SK-N-SH (cell line): ENCODE measurements at regions of chrX and their contacts with region 1.

Region 1: GRCh38 chrX:47093248-47093647 is 15.0 kb downstream of the RGN start:
- DNase-seq: peak; percentile 26
- H3K4me3 ChIP-seq: no peak overlapping the region
- H3K27ac ChIP-seq: no peak overlapping the region
- H3K4me1 ChIP-seq: no peaks in the 10 kb centered on the region
- H3K27me3 ChIP-seq: peaks cover 12% of the 10 kb centered on the region; the same call in 1 of the 2 replicates
- CTCF ChIP-seq: peak; percentile 74
- EP300 ChIP-seq: no peak
- RAD21 ChIP-seq: peak; percentile 69

Region 2: DNA sequence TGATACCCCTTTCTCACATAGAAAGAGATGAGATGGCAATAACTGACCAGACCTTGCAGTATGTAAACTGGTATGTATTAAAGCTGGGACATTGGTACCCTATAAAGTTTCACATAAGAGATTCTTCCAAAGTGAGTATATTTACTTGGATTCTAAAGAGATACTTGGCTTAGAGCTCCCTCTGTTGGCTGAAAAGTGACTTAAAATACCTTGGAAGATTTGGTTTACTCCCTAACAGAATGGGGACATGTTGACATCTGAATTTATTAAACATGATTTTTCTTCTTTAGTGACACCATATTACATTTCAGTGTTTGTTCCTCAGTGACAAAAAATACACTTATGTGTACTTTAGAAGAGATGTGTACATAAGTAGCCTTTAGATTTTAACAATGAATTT is 62.9 kb before region 1 on chrX:
- CTCF ChIA-PET with region 1: interaction called, 13 read pairs
- POLR2A ChIA-PET with region 1: no interaction called
- DNase-seq: peak; percentile 41
- H3K4me3 ChIP-seq: no peak overlapping the region
- H3K27ac ChIP-seq: no peak overlapping the region
- H3K4me1 ChIP-seq: no peaks in the 10 kb centered on the region
- H3K27me3 ChIP-seq: no peaks in the 10 kb centered on the region
- CTCF ChIP-seq: peak; percentile 80
- EP300 ChIP-seq: no peak
- RAD21 ChIP-seq: peak; percentile 81